ENCODE measurements at regions of chr14 and their contacts with region 1.

Region 1: GRCh38 chr14:54566410-54567223 is at the start of gene SAMD4A:
- DNase-seq: peak; percentile 93
- ATAC-seq: peak; percentile 54
- total RNA-seq, gene SAMD4A: 128 TPM

Region 2: DNA sequence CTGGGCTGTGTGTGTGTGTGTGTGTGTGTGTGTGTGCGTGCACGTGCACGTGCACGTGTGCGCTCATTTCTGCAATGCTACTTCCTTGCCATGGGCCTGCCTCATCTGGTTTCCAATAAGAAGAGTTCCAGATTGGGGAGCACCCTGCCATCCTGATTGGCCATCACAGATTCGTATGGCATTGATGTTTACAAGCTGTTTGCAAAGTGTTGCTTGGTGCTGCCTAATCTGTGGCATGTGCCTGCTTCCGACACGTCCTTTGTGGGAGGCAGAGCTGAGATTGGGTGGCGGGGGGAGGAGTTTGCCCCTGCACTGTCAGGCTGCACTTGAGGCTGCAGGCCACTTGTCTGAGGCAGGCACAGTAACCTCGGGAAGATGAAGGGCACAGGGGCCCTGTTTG is 39.6 kb after region 1 on chr14:
- intact Hi-C with region 1: loop called (anchors 2 kb)
- DNase-seq: peak; percentile 78
- ATAC-seq: peak; percentile 96

Region 3: DNA sequence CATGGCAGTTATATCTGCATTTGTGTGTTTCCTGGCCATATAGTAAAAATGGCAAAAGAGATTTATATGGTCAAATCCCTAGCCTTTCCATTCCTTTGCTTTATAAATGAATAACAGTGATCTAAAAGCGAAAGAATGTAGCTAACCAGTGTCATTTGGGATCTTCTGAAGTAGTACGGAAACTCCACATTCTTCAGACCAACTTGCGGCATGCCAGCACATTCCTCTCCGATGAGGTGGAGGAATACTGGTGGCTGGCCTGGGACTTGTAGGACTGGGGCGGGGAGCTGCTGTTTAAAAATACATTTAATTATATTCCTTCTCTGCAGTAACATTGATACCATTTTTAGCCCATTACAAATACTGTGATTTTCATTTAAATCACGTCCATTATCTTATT is 85.6 kb after region 1 on chr14:
- intact Hi-C with region 1: loop called (anchors 2 kb)
- DNase-seq: peak; percentile 88
- ATAC-seq: peak; percentile 94

Region 4: DNA sequence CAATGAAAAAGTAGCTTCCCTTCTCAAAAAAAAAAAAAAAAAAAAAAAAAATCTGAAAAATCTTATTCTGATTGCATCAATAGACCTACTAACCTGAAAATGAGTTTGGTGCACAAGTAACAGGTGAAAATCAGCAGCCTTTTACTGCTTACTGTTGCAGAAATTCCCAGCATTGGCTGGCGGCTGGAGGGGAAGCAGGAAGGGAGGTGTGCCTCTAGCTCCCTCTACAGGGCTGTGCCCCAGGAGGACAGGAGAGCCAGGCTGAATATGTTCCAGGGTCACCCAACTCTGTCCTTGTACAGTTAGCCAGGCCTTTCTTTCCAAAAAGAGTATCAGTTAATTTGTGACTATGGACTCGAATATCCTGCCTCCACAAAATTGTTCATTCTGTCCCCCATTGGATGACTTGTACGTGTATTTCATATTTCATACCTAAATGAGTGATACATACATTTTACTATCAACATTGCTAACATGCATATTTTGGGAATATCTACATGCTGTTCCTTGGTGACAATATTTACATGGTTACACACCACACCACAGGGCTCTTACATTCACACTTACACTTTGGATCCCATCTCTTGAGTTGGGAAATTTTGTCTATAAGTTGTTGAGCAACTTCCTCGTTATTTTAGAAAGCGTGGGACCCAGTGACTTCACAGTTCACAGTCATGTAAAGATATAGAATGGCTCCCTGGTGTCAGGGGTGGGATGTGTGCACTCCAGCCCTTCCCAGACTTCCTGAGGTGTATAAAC is 125.1 kb after region 1 on chr14:
- intact Hi-C with region 1: loop called (anchors 1 kb)
- DNase-seq: peak; percentile 82
- ATAC-seq: peak; percentile 86

Region 5: GRCh38 chr14:54773171-54773975 is 206.8 kb after region 1 on chr14:
- intact Hi-C with region 1: loop called (anchors 1 kb)
- DNase-seq: peak; percentile 84
- ATAC-seq: peak; percentile 83

Region 6: GRCh38 chr14:54805521-54806322 is 239.1 kb after region 1 on chr14:
- intact Hi-C with region 1: loop called (anchors 1 kb)
- DNase-seq: peak; percentile 89
- ATAC-seq: peak; percentile 92

Region 7: GRCh38 chr14:54893151-54893760 is 326.6 kb after region 1 on chr14:
- intact Hi-C with region 1: loop called (anchors 10 kb)
- DNase-seq: no peak
- ATAC-seq: no peak